GM10248 (cell line): ENCODE measurements at regions of chr10 and their contacts with region 1.

Region 1: GRCh38 chr10:71569775-71570588 is 149.6 kb downstream of the C10orf105 start:
- DNase-seq: peak; percentile 84
- CTCF ChIP-seq: peak; percentile 85

Region 2: DNA sequence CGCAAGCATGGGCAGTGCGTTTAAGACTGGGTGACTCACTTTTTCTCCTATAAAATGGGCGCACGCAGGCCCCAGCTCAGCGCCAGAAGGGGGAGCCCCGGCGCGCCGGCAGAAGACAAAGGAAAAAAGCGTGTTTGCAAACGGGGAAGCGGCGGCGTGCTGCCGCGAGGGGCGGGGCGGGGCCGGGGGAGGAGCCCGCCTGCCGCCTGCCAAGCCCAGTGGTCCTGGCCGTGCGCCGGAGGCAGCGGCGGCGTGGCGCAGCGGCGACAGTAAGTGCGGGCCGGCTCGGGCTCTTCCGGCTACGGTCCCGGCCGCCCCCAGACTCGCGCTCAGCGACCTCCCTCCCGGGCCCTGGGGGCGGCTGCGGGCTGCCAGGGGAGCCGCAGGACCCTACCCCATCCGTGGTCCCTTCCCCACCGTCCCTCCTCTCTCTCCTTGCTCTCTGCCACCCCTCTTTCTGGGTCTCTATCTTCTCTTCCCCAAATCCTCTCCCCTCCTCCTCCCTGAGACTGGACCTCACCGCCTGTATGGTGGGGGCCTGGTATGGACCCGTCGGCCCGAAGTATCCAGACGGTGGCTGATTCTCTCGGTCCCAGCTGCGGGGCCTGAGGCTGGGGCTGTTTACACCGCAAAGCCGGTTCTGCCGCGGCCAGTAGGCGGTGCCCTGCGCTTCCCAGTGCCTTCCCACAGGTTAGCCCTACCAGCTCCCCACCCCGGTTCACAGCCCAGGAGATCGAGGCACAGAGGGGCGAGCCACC is 250.8 kb before region 1 on chr10 and contains the start of gene SLC29A3:
- CTCF ChIA-PET with region 1: interaction called, 140 read pairs
- POLR2A ChIA-PET with region 1: no interaction called
- DNase-seq: peak; percentile 94
- CTCF ChIP-seq: peak; percentile 84

Region 3: GRCh38 chr10:71390461-71390835 is 179.5 kb before region 1 on chr10:
- CTCF ChIA-PET with region 1: interaction called, 61 read pairs
- POLR2A ChIA-PET with region 1: no interaction called
- DNase-seq: no peak
- CTCF ChIP-seq: no peak

Region 4: GRCh38 chr10:71494980-71495381 is 75.0 kb before region 1 on chr10:
- CTCF ChIA-PET with region 1: interaction called, 13 read pairs
- POLR2A ChIA-PET with region 1: no interaction called
- DNase-seq: peak; percentile 75
- CTCF ChIP-seq: no peak

Region 5: GRCh38 chr10:71582019-71582418 is 12.0 kb after region 1 on chr10:
- CTCF ChIA-PET with region 1: interaction called, 40 read pairs
- POLR2A ChIA-PET with region 1: no interaction called
- DNase-seq: no peak
- CTCF ChIP-seq: no peak